CD4-positive, alpha-beta memory T cell (primary cell): ENCODE measurements at regions of chr6 and their contacts with region 1.

Region 1: DNA sequence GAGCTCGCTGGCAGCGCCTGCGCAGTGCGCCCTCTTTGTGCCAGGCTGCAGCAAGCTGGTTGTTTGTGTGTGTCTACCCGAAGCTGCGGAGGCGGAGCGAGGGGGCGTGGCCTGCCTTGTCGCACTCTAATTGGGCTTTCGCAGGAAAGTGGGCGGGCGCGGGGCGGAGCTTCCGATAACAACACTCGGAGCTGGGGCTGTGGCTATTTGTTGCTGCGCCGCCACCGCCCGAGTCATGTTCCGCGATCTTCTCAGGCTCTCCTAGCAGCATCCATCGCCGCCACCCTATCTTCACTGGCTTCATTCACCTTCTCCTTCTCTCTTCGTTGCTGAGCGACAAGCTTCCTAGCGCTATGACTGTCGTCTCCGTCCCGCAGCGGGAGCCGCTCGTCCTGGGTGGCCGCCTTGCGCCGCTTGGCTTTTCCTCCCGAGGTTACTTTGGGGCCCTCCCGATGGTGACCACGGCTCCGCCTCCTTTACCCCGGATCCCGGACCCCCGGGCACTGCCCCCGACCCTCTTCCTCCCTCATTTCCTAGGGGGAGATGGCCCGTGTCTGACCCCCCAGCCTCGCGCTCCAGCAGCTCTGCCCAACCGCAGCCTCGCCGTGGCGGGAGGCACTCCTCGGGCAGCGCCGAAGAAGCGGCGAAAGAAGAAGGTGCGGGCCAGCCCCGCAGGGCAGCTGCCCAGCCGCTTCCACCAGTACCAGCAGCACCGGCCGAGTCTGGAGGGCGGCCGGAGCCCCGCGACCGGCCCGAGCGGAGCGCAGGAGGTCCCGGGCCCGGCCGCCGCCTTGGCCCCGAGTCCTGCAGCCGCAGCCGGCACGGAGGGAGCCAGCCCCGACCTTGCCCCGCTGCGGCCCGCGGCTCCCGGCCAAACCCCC is at the start of gene PNRC1:
- DNase-seq: peak; percentile 99 to 100 (median 100)
- H3K4me3 ChIP-seq: peak within 1 kb of the TSS; percentile 79 to 100
- H3K4me3 Mint-ChIP-seq: peak within 1 kb of the TSS; percentile 91 to 99 (median 94)
- H3K27ac ChIP-seq: peak within 1 kb of the TSS; percentile 99
- H3K27ac Mint-ChIP-seq: peak within 1 kb of the TSS; percentile 96 to 100 (median 99)
- H3K4me1 ChIP-seq: peaks cover 48% of the 10 kb centered on the region
- H3K4me1 Mint-ChIP-seq: peaks cover 26 to 67% (median 39%) of the 10 kb centered on the region in 4 donors
- H3K27me3 ChIP-seq: no peaks in the 10 kb centered on the region
- H3K27me3 Mint-ChIP-seq: peaks cover 0 to 3% of the 10 kb centered on the region in 2 donors
- total RNA-seq, gene PNRC1: 622 to 667 TPM

Region 2: GRCh38 chr6:88963139-88964090 is 117.4 kb before region 1 on chr6 and contains the start of gene RNGTT:
- CTCF ChIA-PET with region 1: interaction called, 3 read pairs
- POLR2A ChIA-PET with region 1: interaction called, 102 read pairs
- intact Hi-C with region 1: loop called (anchors 1 kb)
- DNase-seq: peak; percentile 95 to 96 (median 96)
- H3K4me3 ChIP-seq: peak within 1 kb of the TSS; percentile 79 to 99
- H3K4me3 Mint-ChIP-seq: peak within 1 kb of the TSS; percentile 90 to 99 (median 98)
- H3K27ac ChIP-seq: peak within 1 kb of the TSS; percentile 68
- H3K27ac Mint-ChIP-seq: peak within 1 kb of the TSS; percentile 88 to 98 (median 97)
- H3K4me1 ChIP-seq: peaks cover 30% of the 10 kb centered on the region
- H3K4me1 Mint-ChIP-seq: peaks cover 27 to 56% (median 34%) of the 10 kb centered on the region in 4 donors
- H3K27me3 ChIP-seq: no peaks in the 10 kb centered on the region
- H3K27me3 Mint-ChIP-seq: no peaks in the 10 kb centered on the region
- total RNA-seq, gene RNGTT: 17.4 to 21.8 TPM

Region 3: GRCh38 chr6:89002523-89002922 is 78.3 kb before region 1 on chr6:
- CTCF ChIA-PET with region 1: no interaction called
- POLR2A ChIA-PET with region 1: no interaction called
- intact Hi-C with region 1: no loop called
- DNase-seq: no peak
- H3K4me3 ChIP-seq: no peak overlapping the region
- H3K4me3 Mint-ChIP-seq: no peak overlapping the region
- H3K27ac ChIP-seq: no peak overlapping the region
- H3K27ac Mint-ChIP-seq: no peak overlapping the region
- H3K4me1 ChIP-seq: no peaks in the 10 kb centered on the region
- H3K4me1 Mint-ChIP-seq: peaks cover 0 to 3% (median under 1%) of the 10 kb centered on the region in 4 donors
- H3K27me3 ChIP-seq: no peaks in the 10 kb centered on the region
- H3K27me3 Mint-ChIP-seq: peaks cover 3 to 4% of the 10 kb centered on the region in 2 donors

Region 4: DNA sequence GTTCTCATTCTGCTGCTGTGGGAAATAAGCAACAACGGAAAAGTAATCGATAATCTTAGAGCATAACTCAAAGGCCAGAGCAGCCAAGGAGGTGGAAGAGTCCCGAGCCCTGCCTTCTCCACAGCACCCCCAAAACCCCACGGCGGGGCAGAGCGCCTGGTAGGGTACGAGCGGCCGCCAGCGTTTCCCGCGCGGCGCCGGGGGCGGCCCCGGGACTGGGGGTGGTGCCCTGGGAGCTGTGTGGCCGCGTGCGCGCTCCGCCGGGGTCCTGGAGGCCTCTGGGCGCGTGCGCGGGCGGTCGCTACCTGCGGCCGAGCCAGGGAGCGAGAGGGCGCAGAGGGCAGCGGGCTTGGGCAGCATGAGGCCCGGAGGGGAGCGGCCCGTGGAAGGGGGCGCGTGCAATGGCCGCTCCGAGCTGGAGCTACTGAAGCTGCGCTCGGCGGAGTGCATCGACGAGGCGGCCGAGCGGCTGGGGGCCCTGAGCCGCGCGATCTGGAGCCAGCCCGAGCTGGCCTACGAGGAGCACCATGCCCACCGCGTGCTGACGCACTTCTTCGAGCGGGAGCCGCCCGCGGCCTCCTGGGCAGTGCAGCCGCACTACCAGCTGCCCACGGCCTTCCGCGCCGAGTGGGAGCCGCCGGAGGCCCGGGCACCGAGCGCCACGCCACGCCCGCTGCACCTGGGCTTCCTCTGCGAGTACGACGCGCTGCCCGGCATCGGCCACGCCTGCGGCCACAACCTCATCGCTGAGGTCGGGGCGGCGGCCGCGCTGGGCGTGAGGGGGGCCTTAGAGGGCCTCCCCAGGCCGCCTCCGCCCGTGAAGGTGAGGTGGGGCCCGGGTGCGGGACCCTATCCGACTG is 65.2 kb after region 1 on chr6 and contains the start of gene PM20D2:
- CTCF ChIA-PET with region 1: interaction called, 19 read pairs
- POLR2A ChIA-PET with region 1: interaction called, 155 read pairs
- intact Hi-C with region 1: loop called (anchors 1 kb)
- DNase-seq: peak; percentile 52 to 61 (median 57)
- H3K4me3 ChIP-seq: peak within 1 kb of the TSS; percentile 34 to 44
- H3K4me3 Mint-ChIP-seq: peak within 1 kb of the TSS; percentile 90 to 99 (median 96)
- H3K27ac ChIP-seq: peak within 1 kb of the TSS; percentile 66
- H3K27ac Mint-ChIP-seq: peak within 1 kb of the TSS; percentile 89 to 98 (median 94)
- H3K4me1 ChIP-seq: peaks cover 20% of the 10 kb centered on the region
- H3K4me1 Mint-ChIP-seq: peaks cover 18 to 35% (median 27%) of the 10 kb centered on the region in 4 donors
- H3K27me3 ChIP-seq: no peaks in the 10 kb centered on the region
- H3K27me3 Mint-ChIP-seq: no peaks in the 10 kb centered on the region
- total RNA-seq, gene PM20D2: 11.4 to 11.6 TPM

Region 5: GRCh38 chr6:89352278-89353117 is 271.7 kb after region 1 on chr6 and contains the start of gene UBE2J1:
- CTCF ChIA-PET with region 1: interaction called, 3 read pairs
- POLR2A ChIA-PET with region 1: interaction called, 157 read pairs
- intact Hi-C with region 1: loop called (anchors 2 kb)
- DNase-seq: peak; percentile 67 to 75 (median 71)
- H3K4me3 ChIP-seq: peak within 1 kb of the TSS; percentile 1 to 90
- H3K4me3 Mint-ChIP-seq: peak within 1 kb of the TSS; percentile 92 to 99 (median 98)
- H3K27ac ChIP-seq: peak within 1 kb of the TSS; percentile 89
- H3K27ac Mint-ChIP-seq: peak within 1 kb of the TSS; percentile 86 to 99 (median 98)
- H3K4me1 ChIP-seq: peaks cover 69% of the 10 kb centered on the region
- H3K4me1 Mint-ChIP-seq: peaks cover 44 to 82% (median 61%) of the 10 kb centered on the region in 4 donors
- H3K27me3 ChIP-seq: no peaks in the 10 kb centered on the region
- H3K27me3 Mint-ChIP-seq: no peaks in the 10 kb centered on the region
- total RNA-seq, gene UBE2J1: 21.9 to 22.6 TPM

Region 6: GRCh38 chr6:89638320-89639195 is 557.8 kb after region 1 on chr6 and contains the start of gene LYRM2:
- CTCF ChIA-PET with region 1: no interaction called
- POLR2A ChIA-PET with region 1: interaction called, 21 read pairs
- intact Hi-C with region 1: loop called (anchors 1 kb)
- DNase-seq: peak; percentile 90 to 94 (median 92)
- H3K4me3 ChIP-seq: peak within 1 kb of the TSS; percentile 97 to 99
- H3K4me3 Mint-ChIP-seq: peak within 1 kb of the TSS; percentile 95 to 98 (median 96)
- H3K27ac ChIP-seq: peak within 1 kb of the TSS; percentile 95
- H3K27ac Mint-ChIP-seq: peak within 1 kb of the TSS; percentile 98 to 100 (median 99)
- H3K4me1 ChIP-seq: peaks cover 18% of the 10 kb centered on the region
- H3K4me1 Mint-ChIP-seq: peaks cover 20 to 45% (median 29%) of the 10 kb centered on the region in 4 donors
- H3K27me3 ChIP-seq: no peaks in the 10 kb centered on the region
- H3K27me3 Mint-ChIP-seq: no peaks in the 10 kb centered on the region
- total RNA-seq, gene LYRM2: 31.8 to 36.7 TPM

Region 7: GRCh38 chr6:90413867-90414266 is 1333.1 kb after region 1 on chr6:
- CTCF ChIA-PET with region 1: no interaction called
- POLR2A ChIA-PET with region 1: interaction called, 3 read pairs
- intact Hi-C with region 1: loop called (anchors 5 kb)
- DNase-seq: peak; percentile 80 to 91 (median 86)
- H3K4me3 ChIP-seq: peak overlapping the region; percentile 25 to 30
- H3K4me3 Mint-ChIP-seq: peak overlapping the region; percentile 79 to 93 (median 84)
- H3K27ac ChIP-seq: peak overlapping the region; percentile 34
- H3K27ac Mint-ChIP-seq: peak overlapping the region; percentile 88 to 100 (median 96)
- H3K4me1 ChIP-seq: peaks cover 38% of the 10 kb centered on the region
- H3K4me1 Mint-ChIP-seq: peaks cover 31 to 62% (median 44%) of the 10 kb centered on the region in 4 donors
- H3K27me3 ChIP-seq: no peaks in the 10 kb centered on the region
- H3K27me3 Mint-ChIP-seq: peaks cover 2% of the 10 kb centered on the region in 2 donors